ENCODE measurements at regions of chr10 and their contacts with region 1.

Region 1: DNA sequence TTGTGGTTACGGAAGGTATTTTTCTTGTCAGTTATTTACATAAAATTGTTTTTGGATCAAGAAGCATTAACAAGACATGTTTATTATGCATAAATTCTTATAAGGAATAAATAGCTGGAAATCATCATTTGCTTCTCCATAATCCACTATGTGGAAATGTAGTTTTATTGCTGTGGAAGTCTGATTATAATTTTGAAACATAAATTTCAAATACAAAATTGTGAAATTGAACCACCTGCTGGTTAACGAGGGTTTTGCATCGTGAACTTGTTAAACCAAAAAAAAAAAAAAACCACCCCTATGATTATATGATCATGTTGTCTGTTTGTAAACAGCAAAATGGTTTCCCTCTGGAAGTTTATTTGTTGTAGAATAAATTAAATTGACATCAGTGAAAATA is 25.9 kb downstream of the ABRAXAS2 start:
- DNase-seq: no peak
- H3K4me3 ChIP-seq: no peak overlapping the region
- H3K4me3 Mint-ChIP-seq: no peak overlapping the region
- H3K27ac Mint-ChIP-seq: no peak overlapping the region
- H3K4me1 ChIP-seq: no peaks in the 10 kb centered on the region
- H3K4me1 Mint-ChIP-seq: no peaks in the 10 kb centered on the region
- H3K27me3 ChIP-seq: no peaks in the 10 kb centered on the region
- H3K27me3 Mint-ChIP-seq: no peaks in the 10 kb centered on the region
- CTCF ChIP-seq: peak; percentile 38 to 54

Region 2: GRCh38 chr10:124453960-124454610 is 373.4 kb before region 1 on chr10:
- CTCF ChIA-PET with region 1: no interaction called
- POLR2A ChIA-PET with region 1: interaction called, 18 read pairs
- intact Hi-C with region 1: no loop called
- DNase-seq: no peak
- H3K4me3 ChIP-seq: no peak overlapping the region
- H3K4me3 Mint-ChIP-seq: no peak overlapping the region
- H3K27ac Mint-ChIP-seq: no peak overlapping the region
- H3K4me1 ChIP-seq: peaks cover 27% of the 10 kb centered on the region
- H3K4me1 Mint-ChIP-seq: peaks cover 5% of the 10 kb centered on the region
- H3K27me3 ChIP-seq: peaks cover 2% of the 10 kb centered on the region
- H3K27me3 Mint-ChIP-seq: peaks cover 9% of the 10 kb centered on the region
- CTCF ChIP-seq: no peak

Region 3: GRCh38 chr10:124530215-124530665 is 297.2 kb before region 1 on chr10:
- CTCF ChIA-PET with region 1: interaction called, 3 read pairs
- POLR2A ChIA-PET with region 1: no interaction called
- intact Hi-C with region 1: loop called (anchors 5 kb)
- DNase-seq: peak; percentile 84 to 88
- H3K4me3 ChIP-seq: no peak overlapping the region
- H3K4me3 Mint-ChIP-seq: no peak overlapping the region
- H3K27ac Mint-ChIP-seq: no peak overlapping the region
- H3K4me1 ChIP-seq: no peaks in the 10 kb centered on the region
- H3K4me1 Mint-ChIP-seq: no peaks in the 10 kb centered on the region
- H3K27me3 ChIP-seq: no peaks in the 10 kb centered on the region
- H3K27me3 Mint-ChIP-seq: no peaks in the 10 kb centered on the region
- CTCF ChIP-seq: peak; percentile 89 to 97

Region 4: DNA sequence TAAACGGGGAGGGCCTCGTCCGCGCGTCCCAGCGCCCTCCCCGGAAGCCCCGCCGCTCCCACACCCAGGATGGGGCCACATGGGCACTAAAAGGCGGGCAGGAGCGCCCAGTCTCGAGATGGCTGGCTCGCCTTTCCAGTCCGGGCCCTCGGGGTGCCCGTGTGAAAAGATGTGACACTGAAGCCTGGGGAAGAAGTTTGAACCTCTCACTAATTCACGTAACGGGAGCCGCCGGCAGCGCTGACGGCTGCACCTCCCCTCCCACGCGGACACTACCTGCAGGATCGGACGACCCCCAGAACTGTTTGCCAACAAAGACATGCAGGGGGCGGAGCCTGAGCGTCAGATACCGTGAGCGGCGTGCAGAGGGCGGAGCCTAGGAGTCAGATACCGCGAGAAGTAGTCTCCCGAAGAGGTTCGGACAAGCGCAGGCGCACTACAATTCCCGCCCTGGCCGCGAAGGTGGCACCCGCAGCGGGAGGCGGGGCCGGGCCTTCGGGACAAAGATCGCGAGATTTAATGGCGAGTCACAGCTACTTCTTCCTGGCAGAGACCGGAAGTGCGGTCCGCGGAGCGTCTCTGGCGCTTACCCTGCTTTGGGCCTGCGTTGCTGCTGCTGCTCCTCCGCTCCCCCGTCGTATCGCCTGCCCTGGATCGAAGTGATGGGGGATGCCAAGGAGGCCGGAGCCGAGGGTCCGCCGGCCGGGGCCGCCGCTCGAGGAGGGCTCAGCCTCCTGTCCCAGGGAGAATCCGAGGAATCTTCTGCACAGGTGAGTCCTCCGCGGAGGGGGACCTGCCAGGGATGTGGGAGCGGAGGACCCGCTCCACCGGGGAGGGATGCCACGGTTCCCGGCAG is 891.9 kb after region 1 on chr10 and contains the start of gene EDRF1:
- CTCF ChIA-PET with region 1: no interaction called
- POLR2A ChIA-PET with region 1: no interaction called
- intact Hi-C with region 1: no loop called
- DNase-seq: peak; percentile 99
- H3K4me3 ChIP-seq: peak within 1 kb of the TSS; percentile 75
- H3K4me3 Mint-ChIP-seq: peak within 1 kb of the TSS; percentile 82
- H3K27ac Mint-ChIP-seq: peak within 1 kb of the TSS; percentile 97
- H3K4me1 ChIP-seq: peaks cover 5% of the 10 kb centered on the region; the same call in 1 of the 2 replicates
- H3K4me1 Mint-ChIP-seq: no peaks in the 10 kb centered on the region
- H3K27me3 ChIP-seq: no peaks in the 10 kb centered on the region
- H3K27me3 Mint-ChIP-seq: no peaks in the 10 kb centered on the region
- CTCF ChIP-seq: no peak
- total RNA-seq, gene EDRF1: 40.9 and 43.2 TPM in 2 replicates